GM18951 (cell line): ENCODE measurements at regions of chr9 and their contacts with region 1.

Region 1: DNA sequence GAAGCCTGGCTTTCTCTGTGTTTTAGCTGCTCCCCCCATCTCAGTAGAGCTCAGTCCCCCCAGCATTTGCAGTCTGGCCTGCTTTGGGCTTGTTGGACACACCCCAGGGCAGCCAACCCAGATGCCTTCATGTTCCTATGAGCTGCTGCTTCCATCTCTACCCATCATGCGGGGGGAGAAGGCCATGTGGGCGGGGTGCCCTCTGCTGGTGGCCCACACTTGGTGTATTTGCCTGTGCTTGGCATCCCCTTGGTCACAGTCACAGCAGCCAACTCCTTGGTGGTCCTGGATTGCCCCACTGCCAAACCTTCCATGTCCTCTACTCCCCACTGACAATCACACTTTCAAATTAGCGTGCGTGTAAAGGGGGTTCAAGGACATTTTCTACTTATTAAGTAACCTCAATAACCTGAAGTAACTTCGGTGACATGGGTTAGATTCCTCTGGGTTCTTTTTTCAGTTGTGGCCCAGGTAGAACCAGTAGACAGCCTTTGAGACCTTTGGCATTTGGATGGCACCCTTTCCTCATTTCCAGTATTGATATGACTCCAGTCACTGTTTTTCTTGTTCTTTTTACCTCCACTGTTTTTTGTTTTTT is 42.8 kb downstream of the SNX30 start:
- POLR2A ChIP-seq: no peak

Region 2: GRCh38 chr9:112097712-112098688 is 695.3 kb before region 1 on chr9:
- in situ Hi-C with region 1: loop called (anchors 25 kb)
- POLR2A ChIP-seq: no peak

Region 3: GRCh38 chr9:112731971-112732370 is 61.3 kb before region 1 on chr9:
- in situ Hi-C with region 1: no loop called
- POLR2A ChIP-seq: no peak

Region 4: GRCh38 chr9:113261917-113262671 is 468.8 kb after region 1 on chr9:
- in situ Hi-C with region 1: no loop called
- POLR2A ChIP-seq: no peak